Gastrocnemius medialis (tissue), 4 donors: ENCODE measurements at regions of chr9 and their contacts with region 1.

Region 1: DNA sequence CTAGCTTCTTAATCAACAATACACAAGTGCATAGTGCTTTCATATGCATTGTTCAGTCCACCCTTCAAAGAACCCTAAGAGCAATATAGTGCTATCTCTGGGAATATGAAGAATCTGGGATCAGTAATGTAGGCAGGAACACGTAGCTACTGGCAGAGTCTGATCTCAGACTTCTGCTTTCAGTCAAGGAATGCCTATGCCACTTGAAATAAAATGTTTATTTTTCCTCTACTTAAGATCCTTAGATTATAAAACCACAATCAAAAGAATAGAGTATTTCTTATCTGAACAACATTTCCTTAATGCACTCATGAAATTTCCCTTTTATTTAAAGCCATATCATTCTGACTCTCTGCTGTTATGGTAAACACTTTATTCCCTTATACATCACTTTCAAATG is 1407.8 kb upstream of the C9orf72 start:
- DNase-seq: no peak
- ATAC-seq: no peak
- H3K4me3 ChIP-seq: no peak overlapping the region
- H3K27ac ChIP-seq: no peak overlapping the region
- H3K4me1 ChIP-seq: no peaks in the 10 kb centered on the region
- H3K27me3 ChIP-seq: no peaks in the 10 kb centered on the region
- CTCF ChIP-seq: no peak
- POLR2A ChIP-seq: no peak

Region 2: GRCh38 chr9:29044958-29045357 is 63.8 kb after region 1 on chr9:
- in situ Hi-C with region 1: loop called in 1 of 4 experiments (anchors 10 kb)
- intact Hi-C with region 1: no loop called
- DNase-seq: no peak
- ATAC-seq: no peak
- H3K4me3 ChIP-seq: no peak overlapping the region
- H3K27ac ChIP-seq: no peak overlapping the region
- H3K4me1 ChIP-seq: no peaks in the 10 kb centered on the region
- H3K27me3 ChIP-seq: no peaks in the 10 kb centered on the region
- CTCF ChIP-seq: no peak
- POLR2A ChIP-seq: no peak